T-cell (primary cell): ENCODE measurements at regions of chr1 and their contacts with region 1.

Region 1: GRCh38 chr1:198620951-198621824 is 17.7 kb upstream of the PTPRC start:
- DNase-seq: peak; percentile 42 to 83 (median 56)
- ATAC-seq: peak; percentile 82 to 85 (median 83)
- H3K4me3 ChIP-seq: peak overlapping the region; percentile 38 to 66
- H3K4me3 Mint-ChIP-seq: peak overlapping the region; percentile 68 to 81 (median 70)
- H3K27ac ChIP-seq: peak overlapping the region; percentile 81
- H3K27ac Mint-ChIP-seq: peak overlapping the region; percentile 98 to 100
- H3K4me1 ChIP-seq: peaks cover 54 to 63% of the 10 kb centered on the region in 2 experiments
- H3K4me1 Mint-ChIP-seq: peaks cover 83 to 93% (median 93%) of the 10 kb centered on the region in 3 donors
- H3K27me3 ChIP-seq: no peaks in the 10 kb centered on the region
- H3K27me3 Mint-ChIP-seq: no peaks in the 10 kb centered on the region

Region 2: GRCh38 chr1:198520524-198521254 is 100.5 kb before region 1 on chr1:
- CTCF ChIA-PET with region 1: interaction called in 1 of 2 experiments, 15 read pairs
- POLR2A ChIA-PET with region 1: interaction called, 3 to 4 read pairs
- DNase-seq: peak in 2 of 35 experiments; percentile 3 to 56
- ATAC-seq: peak; percentile 50 to 77 (median 74)
- H3K4me3 ChIP-seq: peak overlapping the region; percentile 15 to 34
- H3K4me3 Mint-ChIP-seq: peak overlapping the region; percentile 55 to 69 (median 68)
- H3K27ac ChIP-seq: peak overlapping the region; percentile 79
- H3K27ac Mint-ChIP-seq: peak overlapping the region; percentile 90
- H3K4me1 ChIP-seq: peaks cover 23 to 49% of the 10 kb centered on the region in 2 experiments
- H3K4me1 Mint-ChIP-seq: peaks cover 67 to 81% (median 70%) of the 10 kb centered on the region in 3 donors
- H3K27me3 ChIP-seq: no peaks in the 10 kb centered on the region
- H3K27me3 Mint-ChIP-seq: no peaks in the 10 kb centered on the region

Region 3: GRCh38 chr1:198595765-198596164 is 25.4 kb before region 1 on chr1:
- CTCF ChIA-PET with region 1: no interaction called
- POLR2A ChIA-PET with region 1: no interaction called
- DNase-seq: no peak
- ATAC-seq: no peak
- H3K4me3 ChIP-seq: no peak overlapping the region
- H3K4me3 Mint-ChIP-seq: peak overlapping the region in 1 of 3 donors; percentile 48
- H3K27ac ChIP-seq: no peak overlapping the region
- H3K27ac Mint-ChIP-seq: peak overlapping the region in 1 of 2 donors; percentile 40
- H3K4me1 ChIP-seq: peaks cover 21 to 35% of the 10 kb centered on the region in 2 experiments
- H3K4me1 Mint-ChIP-seq: peaks cover 60 to 72% (median 62%) of the 10 kb centered on the region in 3 donors
- H3K27me3 ChIP-seq: no peaks in the 10 kb centered on the region
- H3K27me3 Mint-ChIP-seq: no peaks in the 10 kb centered on the region

Region 4: GRCh38 chr1:198606020-198606438 is 15.2 kb before region 1 on chr1:
- CTCF ChIA-PET with region 1: interaction called, 3 to 18 read pairs
- POLR2A ChIA-PET with region 1: interaction called, 3 to 5 read pairs
- DNase-seq: no peak
- ATAC-seq: peak in 1 of 4 experiments; percentile 27
- H3K4me3 ChIP-seq: no peak overlapping the region
- H3K4me3 Mint-ChIP-seq: peak overlapping the region in 1 of 3 donors; percentile 0
- H3K27ac ChIP-seq: no peak overlapping the region
- H3K27ac Mint-ChIP-seq: peak overlapping the region; percentile 79 to 84
- H3K4me1 ChIP-seq: peaks cover 15 to 36% of the 10 kb centered on the region in 2 experiments
- H3K4me1 Mint-ChIP-seq: peaks cover 70% of the 10 kb centered on the region in 3 donors
- H3K27me3 ChIP-seq: no peaks in the 10 kb centered on the region
- H3K27me3 Mint-ChIP-seq: no peaks in the 10 kb centered on the region

Region 5: DNA sequence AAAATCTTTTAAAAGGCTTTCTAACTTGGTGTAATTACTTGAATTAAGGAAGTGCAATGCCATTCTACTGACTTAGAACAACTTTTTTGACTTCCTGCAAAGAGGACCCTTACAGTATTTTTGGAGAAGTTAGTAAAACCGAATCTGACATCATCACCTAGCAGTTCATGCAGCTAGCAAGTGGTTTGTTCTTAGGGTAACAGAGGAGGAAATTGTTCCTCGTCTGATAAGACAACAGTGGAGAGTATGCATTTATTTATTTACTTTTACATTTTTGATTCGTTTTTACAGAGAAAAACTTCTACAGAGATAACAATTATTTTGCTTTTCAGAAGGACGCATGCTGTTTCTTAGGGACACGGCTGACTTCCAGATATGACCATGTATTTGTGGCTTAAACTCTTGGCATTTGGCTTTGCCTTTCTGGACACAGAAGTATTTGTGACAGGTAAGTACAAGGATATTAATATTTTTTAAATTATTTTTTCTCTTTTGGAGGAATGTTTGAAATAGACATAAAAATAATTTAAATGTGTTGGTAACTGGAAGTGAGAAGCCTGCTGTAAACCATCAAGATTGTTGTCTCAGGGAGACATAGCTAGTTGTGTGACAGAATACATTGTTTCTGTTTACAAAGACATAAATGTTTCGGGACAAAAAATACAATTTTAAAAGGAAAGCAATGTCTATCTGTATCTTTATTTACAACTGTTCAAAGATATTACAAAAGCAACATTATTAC is 17.9 kb after region 1 on chr1 and contains the start of gene PTPRC:
- CTCF ChIA-PET with region 1: interaction called, 12 to 13 read pairs
- POLR2A ChIA-PET with region 1: interaction called, 4 to 86 read pairs
- DNase-seq: peak in 4 of 35 experiments; percentile 23 to 76 (median 26)
- ATAC-seq: peak; percentile 76 to 84 (median 81)
- H3K4me3 ChIP-seq: peak within 1 kb of the TSS; percentile 70 to 80
- H3K4me3 Mint-ChIP-seq: peak within 1 kb of the TSS; percentile 79 to 98 (median 81)
- H3K27ac ChIP-seq: peak within 1 kb of the TSS; percentile 85
- H3K27ac Mint-ChIP-seq: peak within 1 kb of the TSS; percentile 95 to 99
- H3K4me1 ChIP-seq: peaks cover 19 to 48% of the 10 kb centered on the region in 2 experiments
- H3K4me1 Mint-ChIP-seq: peaks cover 52 to 70% (median 59%) of the 10 kb centered on the region in 3 donors
- H3K27me3 ChIP-seq: no peaks in the 10 kb centered on the region
- H3K27me3 Mint-ChIP-seq: no peaks in the 10 kb centered on the region
- total RNA-seq, gene PTPRC: 674 to 984 (median 781) TPM

Region 6: DNA sequence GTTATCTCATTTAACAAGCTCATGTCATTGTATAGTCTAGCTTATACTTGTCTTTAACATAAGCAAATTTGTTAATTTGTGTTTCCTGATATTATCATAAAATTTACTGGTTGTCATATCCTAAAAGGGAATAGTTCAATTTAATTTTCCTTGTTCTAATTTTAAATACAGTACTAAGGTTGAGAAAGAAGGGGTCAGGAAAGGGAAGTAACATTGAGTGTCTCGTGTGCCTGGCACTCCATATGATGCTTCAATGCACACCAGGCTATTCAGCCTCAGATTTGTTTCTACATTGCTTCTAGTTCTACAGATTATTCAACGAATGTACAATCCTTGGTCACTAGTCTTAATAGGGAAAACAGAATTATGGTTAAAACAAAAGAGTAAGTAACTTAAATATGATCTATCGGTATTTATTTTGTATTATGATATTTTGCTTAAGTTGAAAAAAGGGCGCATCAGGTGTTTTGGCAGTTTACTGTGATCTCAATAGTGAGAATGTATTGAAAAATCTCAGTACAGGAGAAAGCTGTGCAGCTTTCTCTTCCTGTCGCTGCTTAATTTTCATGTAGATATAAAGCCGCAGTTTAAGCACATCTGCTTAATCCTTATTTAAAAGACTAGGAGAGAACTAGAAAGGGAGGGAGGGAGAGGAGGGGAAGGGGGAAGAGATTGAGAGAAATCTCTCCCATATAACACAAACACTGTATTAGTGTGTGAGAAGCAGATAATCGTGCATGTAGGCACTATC is 30.6 kb after region 1 on chr1:
- CTCF ChIA-PET with region 1: interaction called, 3 to 17 read pairs
- POLR2A ChIA-PET with region 1: interaction called, 13 read pairs
- DNase-seq: no peak
- ATAC-seq: peak; percentile 27 to 34 (median 31)
- H3K4me3 ChIP-seq: peak overlapping the region in 1 of 2 donors; percentile 27
- H3K4me3 Mint-ChIP-seq: peak overlapping the region; percentile 63 to 81 (median 76)
- H3K27ac ChIP-seq: peak overlapping the region; percentile 87
- H3K27ac Mint-ChIP-seq: peak overlapping the region; percentile 94 to 98
- H3K4me1 ChIP-seq: peaks cover 20 to 80% of the 10 kb centered on the region in 2 experiments
- H3K4me1 Mint-ChIP-seq: peaks cover 81 to 85% (median 83%) of the 10 kb centered on the region in 3 donors
- H3K27me3 ChIP-seq: no peaks in the 10 kb centered on the region
- H3K27me3 Mint-ChIP-seq: no peaks in the 10 kb centered on the region

Region 7: DNA sequence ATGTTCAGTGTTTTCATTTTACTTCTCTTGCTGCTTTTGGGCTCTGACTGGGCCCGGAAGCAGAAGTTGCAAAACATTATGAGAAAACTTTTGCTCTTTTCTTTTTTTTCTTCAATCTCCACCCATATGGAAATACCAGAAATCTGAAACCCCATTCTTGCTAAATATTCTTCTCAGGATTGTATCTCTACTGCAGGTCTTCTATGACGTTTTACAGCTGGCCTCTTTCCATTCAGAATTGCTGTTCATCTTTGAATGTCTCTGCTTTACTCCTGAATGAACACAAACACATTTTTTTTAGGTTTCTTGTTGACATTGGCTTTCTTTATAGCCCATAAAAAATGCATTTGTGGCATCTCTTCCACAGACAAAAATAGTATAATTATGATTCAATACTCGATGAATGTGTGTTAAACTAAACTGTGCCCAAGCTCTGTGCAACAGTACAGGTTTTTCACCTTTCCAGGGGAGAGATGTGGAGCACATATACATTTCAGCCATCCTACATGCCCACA is 36.4 kb after region 1 on chr1:
- CTCF ChIA-PET with region 1: interaction called in 1 of 2 experiments, 17 read pairs
- POLR2A ChIA-PET with region 1: interaction called, 3 to 13 read pairs
- DNase-seq: peak in 12 of 35 experiments; percentile 19 to 79 (median 28)
- ATAC-seq: peak; percentile 38 to 48 (median 42)
- H3K4me3 ChIP-seq: peak overlapping the region; percentile 4 to 15
- H3K4me3 Mint-ChIP-seq: peak overlapping the region; percentile 65 to 85 (median 73)
- H3K27ac ChIP-seq: peak overlapping the region; percentile 87
- H3K27ac Mint-ChIP-seq: peak overlapping the region; percentile 97 to 98
- H3K4me1 ChIP-seq: peaks cover 22 to 77% of the 10 kb centered on the region in 2 experiments
- H3K4me1 Mint-ChIP-seq: peaks cover 74 to 82% (median 76%) of the 10 kb centered on the region in 3 donors
- H3K27me3 ChIP-seq: no peaks in the 10 kb centered on the region
- H3K27me3 Mint-ChIP-seq: no peaks in the 10 kb centered on the region